BJ (cell line): ENCODE measurements at regions of chr1 and their contacts with region 1.

Region 1: GRCh38 chr1:172002725-172003345 is 161.5 kb downstream of the DNM3 start:
- DNase-seq: no peak
- H3K4me3 ChIP-seq: no peak overlapping the region
- H3K27me3 ChIP-seq: no peaks in the 10 kb centered on the region
- CTCF ChIP-seq: peak; percentile 77

Region 2: GRCh38 chr1:171919891-171920887 is 82.6 kb before region 1 on chr1:
- CTCF ChIA-PET with region 1: no interaction called
- POLR2A ChIA-PET with region 1: no interaction called
- DNase-seq: peak; percentile 44
- H3K4me3 ChIP-seq: no peak overlapping the region
- H3K27me3 ChIP-seq: no peaks in the 10 kb centered on the region
- CTCF ChIP-seq: no peak

Region 3: DNA sequence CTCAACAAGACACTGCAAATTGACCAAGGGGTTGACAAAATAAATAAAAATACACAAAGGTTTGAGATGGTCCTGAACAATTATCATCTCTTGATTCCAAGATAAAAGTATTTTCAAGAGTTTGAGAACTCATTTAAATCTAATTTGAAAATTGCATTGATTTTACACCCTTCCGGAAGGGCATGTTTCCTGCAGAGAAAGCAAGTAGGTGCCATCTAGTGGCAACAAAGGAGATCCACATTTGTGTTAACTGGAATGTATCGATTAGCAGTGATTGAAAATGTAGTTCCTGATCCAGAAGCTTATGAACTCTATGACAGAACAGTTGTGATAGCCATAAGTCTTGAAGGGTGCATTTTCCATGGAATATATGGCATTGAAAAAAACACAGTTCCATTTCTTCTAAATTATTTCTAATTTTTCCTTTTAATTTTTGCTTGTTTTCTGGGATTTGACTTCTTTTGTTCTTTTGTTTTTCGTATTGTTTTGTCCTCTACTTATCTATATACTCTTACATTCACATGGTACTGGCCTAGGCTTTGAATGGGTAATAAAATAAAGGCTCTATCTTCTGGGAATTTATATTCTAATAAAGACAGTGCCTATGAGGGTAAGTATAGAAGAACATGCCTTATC is 17.9 kb before region 1 on chr1:
- CTCF ChIA-PET with region 1: interaction called, 10 read pairs
- POLR2A ChIA-PET with region 1: no interaction called
- DNase-seq: no peak
- H3K4me3 ChIP-seq: no peak overlapping the region
- H3K27me3 ChIP-seq: no peaks in the 10 kb centered on the region
- CTCF ChIP-seq: peak; percentile 74

Region 4: GRCh38 chr1:172019976-172020375 is 17.1 kb after region 1 on chr1:
- CTCF ChIA-PET with region 1: interaction called, 14 read pairs
- POLR2A ChIA-PET with region 1: no interaction called
- DNase-seq: no peak
- H3K4me3 ChIP-seq: no peak overlapping the region
- H3K27me3 ChIP-seq: no peaks in the 10 kb centered on the region
- CTCF ChIP-seq: no peak

Region 5: DNA sequence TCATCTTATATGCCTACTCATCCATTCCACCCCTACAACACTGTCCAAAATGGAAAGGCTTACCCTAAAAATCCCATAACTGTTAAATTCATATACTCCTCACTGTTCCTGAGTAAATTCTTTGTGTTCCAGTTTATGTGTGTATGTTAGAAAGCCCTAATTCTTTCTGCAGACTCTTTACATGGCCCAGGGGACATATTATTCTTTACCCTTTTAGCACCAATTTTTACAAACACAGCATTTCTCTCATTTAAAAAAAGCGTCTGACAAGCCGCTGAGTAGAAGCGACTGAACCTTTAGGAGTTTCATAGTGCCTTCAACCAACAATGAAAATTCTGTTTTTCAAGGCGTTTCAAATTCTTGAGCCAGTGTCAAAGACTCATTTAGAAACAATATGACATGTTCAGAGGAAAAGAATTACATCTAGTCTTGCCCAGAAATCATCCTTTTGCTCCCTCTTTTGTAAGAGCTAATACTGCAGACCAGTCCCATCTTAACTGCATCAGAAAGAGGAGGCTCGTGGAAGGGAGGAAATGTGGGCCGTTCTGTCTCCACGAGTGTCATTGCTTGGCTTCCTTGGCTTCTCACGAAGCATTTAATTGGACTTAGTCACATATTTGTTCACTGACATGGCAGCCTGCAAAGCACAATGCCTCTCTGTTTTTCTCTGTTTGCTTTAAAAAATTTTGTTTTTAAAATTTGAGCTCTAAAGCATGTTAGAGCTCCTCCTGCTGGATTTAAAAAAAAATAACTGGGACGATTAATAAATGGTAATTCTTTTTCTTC is 396.3 kb after region 1 on chr1:
- CTCF ChIA-PET with region 1: interaction called, 25 read pairs
- POLR2A ChIA-PET with region 1: interaction called, 4 read pairs
- DNase-seq: peak; percentile 94
- H3K4me3 ChIP-seq: no peak overlapping the region
- H3K27me3 ChIP-seq: no peaks in the 10 kb centered on the region
- CTCF ChIP-seq: peak; percentile 36

Region 6: DNA sequence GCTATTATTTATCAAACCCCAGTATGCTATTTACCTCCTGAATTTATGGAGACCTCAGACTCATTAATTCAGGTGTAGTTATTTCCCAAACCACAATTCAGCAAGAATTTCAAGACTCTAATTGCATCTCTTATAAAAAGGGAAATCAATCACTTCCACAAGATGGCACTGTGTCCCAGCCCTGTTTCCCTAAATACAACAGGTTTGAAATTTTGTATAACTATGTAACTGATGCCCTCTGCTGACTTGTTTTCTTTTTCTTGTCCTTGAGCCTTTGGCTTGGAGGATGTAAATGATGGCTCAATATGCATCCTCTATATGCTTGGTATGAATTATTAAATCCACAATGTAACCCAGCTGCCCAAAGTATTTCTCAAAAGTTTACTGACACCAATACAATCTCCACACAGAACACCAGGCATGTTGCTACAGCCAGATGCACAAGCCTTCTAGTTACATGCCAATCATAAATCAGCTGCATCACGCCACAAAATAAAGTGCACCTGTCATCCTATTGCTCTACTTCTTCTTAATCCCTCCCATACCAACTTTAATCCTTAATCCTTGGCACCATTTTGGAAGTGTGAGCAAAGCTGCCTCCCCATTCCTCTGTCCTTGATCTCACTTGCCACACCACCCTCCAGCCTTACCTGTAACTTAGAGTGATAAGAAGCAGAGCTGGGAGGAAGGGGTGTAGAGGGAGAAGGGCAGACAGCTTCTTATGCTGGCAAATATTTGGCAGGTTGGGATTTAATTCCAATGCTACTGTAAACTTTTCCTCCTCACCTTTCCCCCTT is 426.7 kb after region 1 on chr1:
- CTCF ChIA-PET with region 1: interaction called, 49 read pairs
- POLR2A ChIA-PET with region 1: no interaction called
- DNase-seq: peak; percentile 35
- H3K4me3 ChIP-seq: no peak overlapping the region
- H3K27me3 ChIP-seq: no peaks in the 10 kb centered on the region
- CTCF ChIP-seq: peak; percentile 76

Region 7: DNA sequence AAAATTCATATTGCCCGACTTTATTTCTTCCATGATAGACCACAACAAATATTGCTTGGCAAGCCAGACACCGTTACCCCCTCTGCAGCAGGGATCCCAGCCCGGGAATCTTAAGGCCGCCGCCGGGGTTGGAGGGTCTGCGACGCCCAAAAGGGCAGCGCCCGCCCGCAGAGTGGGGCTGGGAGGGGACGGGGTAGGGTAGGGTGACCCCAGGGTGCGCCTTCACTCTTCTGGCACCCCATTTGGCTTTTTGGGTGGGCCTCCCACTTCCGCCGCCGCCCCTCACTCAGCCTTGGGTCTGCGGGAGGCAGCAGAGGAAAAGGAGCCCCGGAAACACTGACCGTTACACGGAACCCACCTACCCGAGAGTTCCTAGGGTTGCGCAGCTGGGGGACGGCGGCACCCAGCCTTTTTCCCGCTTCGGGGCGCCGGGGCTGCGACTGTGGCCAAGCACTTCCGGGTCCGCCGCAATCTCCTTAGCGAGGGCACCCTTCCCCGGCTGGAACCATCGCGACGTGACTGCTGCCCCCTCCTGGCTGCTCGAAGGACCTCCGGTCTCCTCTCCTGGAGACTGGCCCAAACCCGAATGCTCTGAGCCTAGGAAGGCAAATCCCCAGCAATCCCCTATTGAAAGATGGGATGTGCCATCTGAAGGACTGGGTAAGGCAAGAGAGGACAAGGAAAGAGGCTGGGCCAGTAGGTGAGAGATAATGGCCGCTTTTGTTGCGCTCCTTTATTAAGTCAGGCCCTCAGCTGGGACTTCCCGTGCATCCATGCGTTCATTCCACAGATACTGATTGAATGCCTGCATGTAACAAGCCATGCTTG is 441.0 kb after region 1 on chr1 and contains the start of gene PIGC:
- CTCF ChIA-PET with region 1: interaction called, 20 read pairs
- POLR2A ChIA-PET with region 1: no interaction called
- DNase-seq: no peak
- H3K4me3 ChIP-seq: peak within 1 kb of the TSS; percentile 92
- H3K27me3 ChIP-seq: no peaks in the 10 kb centered on the region
- CTCF ChIP-seq: peak; percentile 97
- polyA plus RNA-seq, gene PIGC: 20.7 and 24.4 TPM in 2 replicates